AG04449 (cell line): ENCODE measurements at regions of chr2 and their contacts with region 1.

Region 1: DNA sequence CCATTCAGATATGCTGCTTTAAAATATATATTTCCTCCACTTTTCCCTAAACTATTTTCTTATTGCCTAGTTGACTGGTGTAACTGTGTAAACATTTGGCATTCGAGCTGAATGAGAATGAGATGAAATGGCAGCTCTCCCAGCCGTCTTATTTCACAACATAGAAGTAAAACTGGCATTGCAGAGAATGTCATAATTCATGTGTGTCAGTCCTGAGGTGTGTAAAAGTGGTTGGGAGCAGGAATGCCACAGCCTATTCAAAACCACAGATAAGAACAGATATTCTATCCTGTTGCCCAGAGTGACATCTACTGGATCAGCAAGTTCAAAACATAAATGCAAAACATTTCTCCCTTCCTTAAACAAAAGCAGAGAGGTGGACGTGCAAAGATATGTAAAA is 565.5 kb upstream of the CHAC2 start:
- DNase-seq: peak; percentile 63
- H3K4me3 ChIP-seq: no peak overlapping the region
- CTCF ChIP-seq: peak; percentile 24

Region 2: GRCh38 chr2:53018825-53019425 is 183.1 kb before region 1 on chr2:
- CTCF ChIA-PET with region 1: interaction called, 11 read pairs
- POLR2A ChIA-PET with region 1: no interaction called
- DNase-seq: no peak
- H3K4me3 ChIP-seq: no peak overlapping the region
- CTCF ChIP-seq: peak; percentile 9

Region 3: DNA sequence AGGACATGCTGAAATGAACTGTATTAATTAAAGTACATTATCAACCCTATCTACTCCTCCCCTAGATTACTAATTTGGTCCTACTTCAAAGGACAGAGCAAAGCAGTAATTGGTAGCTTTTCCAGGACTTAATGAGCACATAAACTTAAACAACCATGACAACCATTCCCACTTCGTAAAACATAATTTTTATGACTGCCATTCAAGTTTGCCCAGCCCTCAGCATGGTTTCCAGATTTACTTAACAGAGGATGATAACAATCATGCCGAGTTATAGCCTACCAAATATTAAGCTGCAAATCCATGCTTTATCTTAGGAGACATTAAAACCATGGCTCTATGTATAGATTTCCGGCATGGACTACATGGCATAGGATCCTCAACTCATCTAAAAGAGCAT is 164.5 kb after region 1 on chr2:
- CTCF ChIA-PET with region 1: no interaction called
- POLR2A ChIA-PET with region 1: no interaction called
- DNase-seq: no peak
- H3K4me3 ChIP-seq: no peak overlapping the region
- CTCF ChIP-seq: no peak

Region 4: GRCh38 chr2:53473248-53473647 is 271.2 kb after region 1 on chr2:
- CTCF ChIA-PET with region 1: no interaction called
- POLR2A ChIA-PET with region 1: no interaction called
- DNase-seq: no peak
- H3K4me3 ChIP-seq: no peak overlapping the region
- CTCF ChIP-seq: peak; percentile 2